Endothelial cell of umbilical vein (primary cell): ENCODE measurements at regions of chr3 and their contacts with region 1.

Region 1: DNA sequence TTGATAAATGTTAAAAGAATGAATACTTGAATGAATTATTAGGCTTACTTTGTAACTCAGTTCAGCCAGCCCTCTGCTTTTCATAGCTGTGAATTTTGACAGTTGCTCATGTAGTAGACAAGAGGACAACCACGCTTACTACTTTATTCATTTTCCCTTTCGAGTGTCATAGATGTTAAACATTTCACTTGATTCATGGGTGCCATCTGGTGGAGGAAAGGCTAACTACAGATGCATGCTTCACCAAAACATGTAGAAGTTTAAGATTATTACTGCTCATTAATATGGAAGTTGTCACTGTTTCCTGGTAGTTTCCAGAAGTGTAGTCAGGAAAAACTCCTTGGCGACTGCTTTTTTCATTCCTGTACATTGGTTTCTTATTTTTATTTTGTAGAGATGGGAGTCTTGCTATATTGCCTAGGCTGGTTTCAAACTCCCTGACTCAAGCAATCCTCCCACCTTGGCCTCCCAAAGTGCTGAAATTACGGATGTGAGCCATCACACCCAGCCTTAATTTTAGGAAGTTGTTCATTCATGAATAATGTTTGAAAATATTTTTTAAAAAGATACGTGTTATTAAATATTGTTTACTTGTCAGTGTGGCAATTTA is 163.2 kb downstream of the B3GALNT1 start:
- DNase-seq: peak; percentile 85
- H3K4me3 ChIP-seq: no peak overlapping the region
- H3K27ac ChIP-seq: no peak overlapping the region
- H3K4me1 ChIP-seq: no peaks in the 10 kb centered on the region
- H3K27me3 ChIP-seq: no peaks in the 10 kb centered on the region
- CTCF ChIP-seq: peak; percentile 57 to 62
- POLR2A ChIP-seq: no peak

Region 2: GRCh38 chr3:160498202-160498601 is 443.8 kb before region 1 on chr3:
- CTCF ChIA-PET with region 1: no interaction called
- POLR2A ChIA-PET with region 1: no interaction called
- dilution Hi-C with region 1: no loop called
- intact Hi-C with region 1: loop called (anchors 10 kb)
- DNase-seq: no peak
- H3K4me3 ChIP-seq: no peak overlapping the region
- H3K27ac ChIP-seq: no peak overlapping the region
- H3K4me1 ChIP-seq: no peaks in the 10 kb centered on the region
- H3K27me3 ChIP-seq: no peaks in the 10 kb centered on the region
- CTCF ChIP-seq: no peak
- POLR2A ChIP-seq: no peak

Region 3: DNA sequence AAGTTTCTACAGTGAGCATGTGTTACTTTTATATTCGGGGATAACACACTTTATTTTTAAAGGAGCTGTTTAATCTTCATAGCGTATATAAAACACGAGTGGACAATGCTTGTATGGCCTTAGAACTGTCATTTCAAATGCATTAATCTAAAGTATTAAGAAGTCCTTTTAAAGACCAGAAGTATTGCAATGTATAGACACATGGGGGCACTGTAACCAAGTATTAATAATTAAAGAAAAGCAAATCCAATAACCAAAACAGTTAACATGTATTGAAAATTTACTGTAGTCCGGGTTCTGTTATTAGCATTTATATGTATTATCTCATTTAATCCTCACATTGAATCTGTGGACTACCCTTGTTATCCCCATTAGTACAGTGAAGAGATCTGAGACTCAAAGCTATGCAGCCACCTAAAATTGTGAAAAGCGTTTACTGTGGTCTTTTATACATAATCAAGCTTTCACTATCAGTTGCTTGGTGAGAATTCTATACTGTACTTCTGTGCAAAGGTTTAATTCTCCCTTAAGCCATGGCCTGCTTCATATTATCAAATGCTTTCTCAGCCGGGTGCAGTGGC is 254.9 kb before region 1 on chr3:
- CTCF ChIA-PET with region 1: interaction called, 37 read pairs
- POLR2A ChIA-PET with region 1: no interaction called
- dilution Hi-C with region 1: no loop called
- intact Hi-C with region 1: loop called (anchors 1 kb)
- DNase-seq: peak; percentile 39
- H3K4me3 ChIP-seq: no peak overlapping the region
- H3K27ac ChIP-seq: no peak overlapping the region
- H3K4me1 ChIP-seq: no peaks in the 10 kb centered on the region
- H3K27me3 ChIP-seq: no peaks in the 10 kb centered on the region
- CTCF ChIP-seq: peak; percentile 16 to 18
- POLR2A ChIP-seq: no peak

Region 4: DNA sequence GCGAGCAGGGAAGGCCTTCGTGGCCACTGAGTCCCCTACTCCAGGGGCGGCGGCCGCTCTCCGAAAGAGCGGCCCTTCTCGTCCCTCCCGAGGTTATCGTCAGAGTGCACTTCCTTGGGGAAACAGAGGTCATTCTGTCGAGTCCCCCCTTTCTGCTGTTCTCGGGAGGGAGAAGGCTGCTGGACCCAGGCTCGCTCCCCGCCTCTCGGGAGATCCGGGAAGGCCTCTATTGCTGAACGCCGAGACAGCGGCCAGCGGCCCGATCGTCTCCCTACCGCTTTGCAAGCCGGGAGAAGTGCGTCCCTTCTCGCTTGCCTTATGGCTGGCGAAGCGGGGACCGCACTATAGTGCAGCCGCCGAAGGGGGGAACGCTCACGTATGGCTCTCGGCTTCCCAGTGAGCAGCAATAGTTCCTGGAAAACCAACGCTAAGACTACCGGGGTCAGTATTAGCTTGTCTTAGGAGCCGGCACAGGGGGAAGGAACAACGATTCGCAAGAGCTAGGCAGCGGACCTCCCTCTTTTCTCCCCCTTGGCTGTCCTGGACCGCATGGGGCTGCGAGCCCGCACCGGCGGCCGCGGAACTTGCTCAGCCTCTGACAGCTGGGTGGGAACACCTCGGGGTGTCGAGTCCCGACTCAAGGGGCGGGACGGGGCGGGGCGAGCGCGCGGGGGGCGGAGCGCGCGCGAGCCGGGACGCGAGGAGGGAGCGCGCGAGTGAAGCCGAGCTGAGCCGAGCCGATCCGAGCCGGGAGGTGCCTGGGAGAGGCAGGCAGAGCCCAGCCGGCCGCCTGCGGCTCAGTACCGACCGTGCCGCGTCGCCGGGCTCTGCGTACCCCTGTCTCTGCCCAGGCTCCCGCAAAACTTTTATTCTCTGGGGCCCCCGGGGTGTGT is 186.9 kb before region 1 on chr3:
- CTCF ChIA-PET with region 1: no interaction called
- POLR2A ChIA-PET with region 1: no interaction called
- dilution Hi-C with region 1: no loop called
- intact Hi-C with region 1: loop called (anchors 1 kb)
- DNase-seq: peak; percentile 95
- H3K4me3 ChIP-seq: peak overlapping the region; percentile 49 to 80 (median 71)
- H3K27ac ChIP-seq: peak overlapping the region; percentile 84
- H3K4me1 ChIP-seq: peaks cover 8% of the 10 kb centered on the region
- H3K27me3 ChIP-seq: peaks cover 5 to 13% of the 10 kb centered on the region in 2 experiments
- CTCF ChIP-seq: no peak
- POLR2A ChIP-seq: no peak

Region 5: GRCh38 chr3:160929595-160929994 is 12.4 kb before region 1 on chr3:
- CTCF ChIA-PET with region 1: interaction called, 12 read pairs
- POLR2A ChIA-PET with region 1: no interaction called
- dilution Hi-C with region 1: no loop called
- intact Hi-C with region 1: no loop called
- DNase-seq: peak; percentile 19
- H3K4me3 ChIP-seq: no peak overlapping the region
- H3K27ac ChIP-seq: no peak overlapping the region
- H3K4me1 ChIP-seq: no peaks in the 10 kb centered on the region
- H3K27me3 ChIP-seq: no peaks in the 10 kb centered on the region
- CTCF ChIP-seq: peak in 1 of 2 donors; percentile 17
- POLR2A ChIP-seq: no peak

Region 6: DNA sequence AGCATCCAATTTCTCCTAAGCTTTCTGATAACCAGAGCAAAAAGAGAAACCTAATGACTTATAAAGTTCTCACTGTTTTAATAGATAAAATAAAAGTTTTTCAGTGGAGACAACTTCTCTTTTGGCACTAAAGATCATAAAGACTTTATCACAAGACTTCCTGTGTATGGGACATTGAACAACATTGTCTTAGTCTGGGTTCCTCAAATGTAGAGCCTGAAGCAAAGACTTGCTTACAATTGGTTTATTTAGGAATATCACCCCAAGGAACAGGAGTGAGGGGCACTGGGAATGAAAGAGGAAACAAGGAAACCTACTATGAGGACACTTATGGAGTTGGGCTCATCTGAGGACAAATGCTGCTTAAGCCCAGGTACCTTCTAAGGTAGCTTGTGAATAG is 35.8 kb after region 1 on chr3:
- CTCF ChIA-PET with region 1: no interaction called
- POLR2A ChIA-PET with region 1: no interaction called
- dilution Hi-C with region 1: no loop called
- intact Hi-C with region 1: no loop called
- DNase-seq: no peak
- H3K4me3 ChIP-seq: no peak overlapping the region
- H3K27ac ChIP-seq: no peak overlapping the region
- H3K4me1 ChIP-seq: peaks cover 9% of the 10 kb centered on the region
- H3K27me3 ChIP-seq: no peaks in the 10 kb centered on the region
- CTCF ChIP-seq: no peak
- POLR2A ChIP-seq: no peak